CD8-positive, alpha-beta T cell (primary cell): ENCODE measurements at regions of chr4 and their contacts with region 1.

Region 1: GRCh38 chr4:129362674-129363274 is 266.8 kb downstream of the C4orf33 start:
- DNase-seq: peak in 7 of 9 experiments; percentile 4 to 67 (median 30)
- ATAC-seq: no peak
- H3K4me3 ChIP-seq: no peak overlapping the region
- H3K4me3 Mint-ChIP-seq: no peak overlapping the region
- H3K27ac ChIP-seq: no peak overlapping the region
- H3K27ac Mint-ChIP-seq: no peak overlapping the region
- H3K4me1 ChIP-seq: no peaks in the 10 kb centered on the region
- H3K4me1 Mint-ChIP-seq: no peaks in the 10 kb centered on the region
- H3K27me3 ChIP-seq: no peaks in the 10 kb centered on the region
- H3K27me3 Mint-ChIP-seq: peaks cover 14% of the 10 kb centered on the region
- CTCF ChIP-seq: peak; percentile 63

Region 2: GRCh38 chr4:129377131-129377845 is 14.5 kb after region 1 on chr4:
- CTCF ChIA-PET with region 1: interaction called, 10 read pairs
- POLR2A ChIA-PET with region 1: no interaction called
- intact Hi-C with region 1: no loop called
- DNase-seq: no peak
- ATAC-seq: no peak
- H3K4me3 ChIP-seq: no peak overlapping the region
- H3K4me3 Mint-ChIP-seq: no peak overlapping the region
- H3K27ac ChIP-seq: no peak overlapping the region
- H3K27ac Mint-ChIP-seq: no peak overlapping the region
- H3K4me1 ChIP-seq: no peaks in the 10 kb centered on the region
- H3K4me1 Mint-ChIP-seq: no peaks in the 10 kb centered on the region
- H3K27me3 ChIP-seq: no peaks in the 10 kb centered on the region
- H3K27me3 Mint-ChIP-seq: peaks cover 2% of the 10 kb centered on the region
- CTCF ChIP-seq: no peak

Region 3: DNA sequence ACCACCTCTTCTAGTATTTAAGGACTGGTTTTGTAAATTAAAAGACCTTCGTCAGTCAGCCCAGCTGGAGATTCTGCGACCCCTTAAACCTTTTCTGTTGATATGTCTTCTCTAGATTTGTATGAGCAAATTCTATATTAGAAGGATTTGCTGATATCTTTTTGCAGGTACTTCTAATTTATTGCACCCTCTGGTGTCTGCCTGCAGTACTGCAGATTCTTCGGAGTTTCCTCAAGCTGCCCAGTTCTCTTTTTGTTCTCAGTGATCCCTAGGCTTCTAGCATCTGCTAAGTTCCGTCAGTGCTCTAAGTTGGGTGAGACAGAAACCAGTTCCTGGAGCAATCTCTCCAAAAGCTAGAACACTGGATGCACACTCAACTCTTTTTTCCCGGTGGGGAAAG is 278.4 kb after region 1 on chr4:
- CTCF ChIA-PET with region 1: no interaction called
- POLR2A ChIA-PET with region 1: no interaction called
- intact Hi-C with region 1: loop called in 1 of 2 experiments (anchors 1 kb)
- DNase-seq: peak in 7 of 9 experiments; percentile 7 to 40 (median 31)
- ATAC-seq: no peak
- H3K4me3 ChIP-seq: no peak overlapping the region
- H3K4me3 Mint-ChIP-seq: no peak overlapping the region
- H3K27ac ChIP-seq: no peak overlapping the region
- H3K27ac Mint-ChIP-seq: no peak overlapping the region
- H3K4me1 ChIP-seq: no peaks in the 10 kb centered on the region
- H3K4me1 Mint-ChIP-seq: no peaks in the 10 kb centered on the region
- H3K27me3 ChIP-seq: no peaks in the 10 kb centered on the region
- H3K27me3 Mint-ChIP-seq: no peaks in the 10 kb centered on the region
- CTCF ChIP-seq: peak; percentile 57